ENCODE measurements at regions of chr17 and their contacts with region 1.

Region 1: DNA sequence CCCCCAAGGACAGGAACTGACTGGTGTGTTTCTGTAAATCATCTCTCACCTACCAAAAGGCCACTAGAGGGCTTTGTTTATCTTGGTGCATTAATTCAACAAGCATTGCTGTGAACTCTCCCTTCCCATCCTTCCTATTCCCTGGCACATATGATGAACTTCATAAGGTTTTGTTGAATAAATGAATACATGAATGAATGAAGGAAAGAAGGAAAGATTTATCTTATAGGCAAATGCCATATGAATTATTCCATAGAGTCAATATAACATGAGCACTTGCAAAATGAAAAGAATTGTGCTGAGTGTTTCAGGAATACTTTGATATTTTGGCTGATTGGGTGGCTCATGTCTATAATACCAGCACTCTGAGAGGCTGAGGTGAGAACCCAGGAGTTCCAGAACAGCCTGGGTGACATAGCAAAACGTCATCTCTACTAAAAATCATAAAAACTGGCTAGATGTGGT is 4.3 kb downstream of the SPDYE4 start:
- DNase-seq: no peak
- H3K4me3 ChIP-seq: no peak overlapping the region
- H3K27ac ChIP-seq: no peak overlapping the region
- H3K4me1 ChIP-seq: no peaks in the 10 kb centered on the region
- H3K27me3 ChIP-seq: no peaks in the 10 kb centered on the region
- CTCF ChIP-seq: peak in 1 of 3 experiments; percentile 30

Region 2: DNA sequence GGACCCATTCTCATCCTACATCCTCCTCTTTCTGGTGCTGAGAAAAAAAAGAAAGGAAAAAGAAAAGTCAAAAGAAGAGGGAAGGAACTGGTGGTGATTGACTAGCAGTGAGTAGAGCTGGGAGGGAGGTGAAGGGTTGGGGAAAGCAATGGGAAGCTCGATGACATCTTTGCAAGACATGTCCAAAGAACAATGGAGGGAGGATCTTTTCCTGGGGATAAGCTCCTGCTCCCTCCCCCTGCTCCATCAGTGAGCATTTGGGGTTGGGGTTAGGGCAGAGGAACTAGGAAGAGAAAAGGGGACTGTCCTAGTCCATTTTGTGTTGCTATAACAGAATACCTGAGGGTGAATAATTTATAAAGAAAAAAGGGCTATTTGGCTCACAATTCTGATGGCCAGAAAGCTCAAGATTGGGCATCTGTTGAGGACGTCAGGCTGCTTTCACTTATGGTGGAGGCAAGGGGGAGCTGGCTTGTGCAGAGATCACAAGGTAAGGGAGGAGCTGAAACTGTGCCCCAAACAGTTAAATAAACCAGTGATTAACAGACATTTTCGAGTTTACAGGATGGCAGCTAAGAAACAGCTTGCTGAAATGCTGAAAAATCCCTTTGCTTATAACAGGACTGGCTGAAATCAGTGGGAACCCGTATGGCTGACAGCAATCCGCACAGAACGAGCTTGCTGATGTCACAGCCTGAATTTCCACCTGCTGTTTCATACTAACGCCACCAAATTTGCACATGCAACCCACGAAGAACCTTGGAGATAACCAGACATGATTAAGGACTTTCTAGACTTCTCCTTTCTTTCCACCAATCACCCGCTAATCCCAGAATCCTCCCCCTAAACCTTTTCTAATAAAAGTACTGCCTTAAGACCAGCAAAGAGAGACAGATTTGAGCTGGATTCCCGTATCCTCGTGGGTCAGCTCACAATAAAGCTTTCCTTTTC is 415.9 kb before region 1 on chr17:
- intact Hi-C with region 1: no loop called
- DNase-seq: no peak
- H3K4me3 ChIP-seq: peak overlapping the region in 1 of 2 donors; percentile 53
- H3K27ac ChIP-seq: no peak overlapping the region
- H3K4me1 ChIP-seq: no peaks in the 10 kb centered on the region
- H3K27me3 ChIP-seq: no peaks in the 10 kb centered on the region
- CTCF ChIP-seq: no peak

Region 3: DNA sequence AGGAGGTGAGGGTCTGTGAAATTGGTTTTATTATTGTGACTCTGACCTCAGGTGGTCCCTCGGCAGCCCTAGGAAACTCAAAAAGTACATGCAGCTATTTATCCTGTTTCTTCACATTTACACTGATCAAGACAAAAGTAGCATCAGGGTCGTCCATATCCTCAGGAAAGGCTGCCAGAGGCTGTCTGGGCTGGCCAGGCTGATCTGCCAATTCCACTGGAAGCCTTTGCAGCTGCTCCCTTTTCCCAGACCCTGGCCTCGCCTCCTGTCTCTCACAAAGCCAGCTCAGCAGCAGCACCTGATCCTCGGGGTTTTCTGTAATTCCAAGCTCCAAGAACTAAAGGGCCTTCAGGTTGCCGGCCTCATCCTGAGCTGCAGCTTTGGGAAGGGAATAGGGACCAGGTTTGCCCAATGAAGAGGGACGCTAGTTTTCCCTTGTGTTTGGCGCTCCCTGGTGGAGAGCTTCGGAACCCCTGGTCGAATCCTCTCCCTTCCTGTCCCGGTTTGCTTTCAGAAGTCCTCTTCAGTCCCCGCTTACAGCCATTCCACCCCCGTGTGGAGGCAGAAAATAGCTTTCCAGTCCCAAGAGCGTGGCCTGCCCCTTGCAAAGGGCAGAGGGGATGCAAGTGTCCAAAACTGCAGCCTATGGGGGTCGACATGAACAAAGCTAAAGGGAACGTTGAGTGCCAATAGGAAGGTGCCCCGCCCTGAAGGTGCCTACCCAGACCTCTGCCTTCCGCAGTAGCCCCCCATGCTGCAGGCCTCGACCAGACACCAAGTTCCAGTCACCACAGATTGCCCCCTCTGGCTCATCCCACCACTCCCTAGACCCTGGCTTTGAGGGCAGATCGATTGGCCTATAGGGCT is 31.8 kb after region 1 on chr17:
- intact Hi-C with region 1: loop called (anchors 2 kb)
- DNase-seq: peak; percentile 36 to 93
- H3K4me3 ChIP-seq: peak overlapping the region in 1 of 2 donors; percentile 10
- H3K27ac ChIP-seq: peak overlapping the region; percentile 3 to 32
- H3K4me1 ChIP-seq: peaks cover 0 to 8% of the 10 kb centered on the region in 2 donors
- H3K27me3 ChIP-seq: no peaks in the 10 kb centered on the region
- CTCF ChIP-seq: peak; percentile 80 to 84 (median 80)

Measured in ascending aorta (tissue), 2 donors.